ENCODE measurements at regions of chr9 and their contacts with region 1.

Region 1: DNA sequence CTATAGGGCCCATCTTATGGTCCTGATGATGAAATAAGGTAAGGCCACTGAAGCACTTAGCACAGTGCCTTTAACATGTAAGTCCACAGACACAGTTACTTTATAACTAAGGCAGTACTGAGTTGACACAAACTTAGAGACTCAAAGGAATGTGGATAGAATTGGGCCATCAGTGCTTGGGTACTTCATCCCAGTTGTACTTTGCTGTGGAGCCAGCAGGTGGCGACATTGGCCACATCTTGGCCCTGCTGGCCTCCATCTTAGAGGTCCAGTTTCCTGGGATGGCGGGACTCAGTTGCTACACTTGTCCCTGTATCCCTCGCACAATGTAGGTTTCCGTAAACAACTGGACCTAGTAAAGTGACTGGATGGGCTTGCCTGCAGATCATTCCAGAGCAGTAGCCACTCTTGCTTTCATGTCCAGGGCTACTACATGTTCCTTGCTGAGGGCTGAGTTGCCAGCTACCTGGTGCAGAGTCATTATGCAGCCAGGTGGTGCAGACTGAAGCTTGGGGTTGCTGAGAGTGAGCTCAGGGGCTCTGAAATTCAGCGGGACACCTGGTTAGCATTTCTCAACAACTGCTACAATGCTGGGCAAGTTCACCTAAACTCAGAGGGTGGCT is 10.6 kb downstream of the MTAP start:
- DNase-seq: peak; percentile 81
- H3K4me3 ChIP-seq: no peak overlapping the region
- H3K27ac ChIP-seq: peak overlapping the region; percentile 85
- H3K4me1 ChIP-seq: peaks cover 20% of the 10 kb centered on the region
- H3K27me3 ChIP-seq: no peaks in the 10 kb centered on the region
- CTCF ChIP-seq: peak; percentile 86 to 89
- POLR2A ChIP-seq: no peak

Region 2: GRCh38 chr9:21802195-21803000 is 10.7 kb before region 1 on chr9 and contains the start of gene MTAP:
- CTCF ChIA-PET with region 1: interaction called, 12 read pairs
- POLR2A ChIA-PET with region 1: no interaction called
- dilution Hi-C with region 1: no loop called
- intact Hi-C with region 1: no loop called
- DNase-seq: peak; percentile 94
- H3K4me3 ChIP-seq: peak within 1 kb of the TSS; percentile 50 to 86 (median 75)
- H3K27ac ChIP-seq: peak within 1 kb of the TSS; percentile 75
- H3K4me1 ChIP-seq: peaks cover 22% of the 10 kb centered on the region
- H3K27me3 ChIP-seq: peaks cover 5 to 10% of the 10 kb centered on the region in 2 experiments
- CTCF ChIP-seq: no peak
- POLR2A ChIP-seq: peak; percentile 88
- total RNA-seq, gene MTAP: 51.2 and 55.1 TPM in 2 replicates

Region 3: DNA sequence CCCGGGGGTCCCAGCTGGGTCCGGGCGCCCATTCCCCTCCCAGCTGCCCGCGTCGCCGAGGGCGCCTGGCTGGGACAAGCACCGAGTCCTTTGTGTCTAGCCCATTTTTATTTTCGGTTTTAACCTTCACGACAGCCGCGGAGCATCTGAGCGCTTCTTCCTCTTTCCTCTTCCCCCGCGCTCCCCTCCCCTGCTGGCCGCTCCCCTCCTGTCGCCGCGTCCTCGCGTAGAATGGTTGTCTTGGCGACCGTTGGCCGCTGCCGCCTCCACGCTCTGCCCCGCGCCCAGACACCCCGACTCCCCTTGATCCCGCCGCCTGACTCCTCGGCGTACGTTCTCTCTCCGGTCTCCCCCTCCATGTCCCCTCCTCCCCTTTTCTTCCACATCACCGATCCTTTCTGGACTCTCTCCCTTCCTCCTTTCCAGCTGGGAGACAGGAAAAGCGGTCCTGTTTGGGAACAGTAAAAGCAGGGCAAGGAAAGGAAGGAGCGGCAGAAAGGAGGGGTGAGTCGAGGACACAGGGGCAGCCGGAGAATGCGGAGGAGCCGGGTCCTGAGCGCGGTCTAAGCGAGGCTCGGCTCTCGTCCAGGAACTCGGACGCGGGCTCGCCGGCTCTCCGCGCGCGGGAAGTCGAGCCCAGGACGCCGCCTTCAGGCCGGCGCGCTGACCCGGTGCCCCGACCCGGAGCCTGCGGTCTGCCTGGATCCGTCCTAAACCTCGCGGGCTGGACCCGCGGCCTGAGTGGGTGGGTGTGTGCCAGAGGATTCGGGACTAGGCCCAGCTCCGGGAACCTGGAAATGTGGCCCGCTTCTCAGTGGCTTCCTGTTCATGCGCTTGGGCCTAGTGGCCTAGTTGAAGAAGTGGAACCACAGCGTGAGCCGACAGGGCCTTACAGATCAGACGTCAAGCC is 182.4 kb after region 1 on chr9:
- CTCF ChIA-PET with region 1: interaction called, 19 read pairs
- POLR2A ChIA-PET with region 1: interaction called, 3 read pairs
- dilution Hi-C with region 1: no loop called
- intact Hi-C with region 1: loop called (anchors 1 kb)
- DNase-seq: peak; percentile 64
- H3K4me3 ChIP-seq: peak overlapping the region; percentile 64 to 97 (median 94)
- H3K27ac ChIP-seq: peak overlapping the region; percentile 75
- H3K4me1 ChIP-seq: peaks cover 7% of the 10 kb centered on the region
- H3K27me3 ChIP-seq: no peaks in the 10 kb centered on the region
- CTCF ChIP-seq: peak; percentile 23 to 43
- POLR2A ChIP-seq: no peak

Region 4: DNA sequence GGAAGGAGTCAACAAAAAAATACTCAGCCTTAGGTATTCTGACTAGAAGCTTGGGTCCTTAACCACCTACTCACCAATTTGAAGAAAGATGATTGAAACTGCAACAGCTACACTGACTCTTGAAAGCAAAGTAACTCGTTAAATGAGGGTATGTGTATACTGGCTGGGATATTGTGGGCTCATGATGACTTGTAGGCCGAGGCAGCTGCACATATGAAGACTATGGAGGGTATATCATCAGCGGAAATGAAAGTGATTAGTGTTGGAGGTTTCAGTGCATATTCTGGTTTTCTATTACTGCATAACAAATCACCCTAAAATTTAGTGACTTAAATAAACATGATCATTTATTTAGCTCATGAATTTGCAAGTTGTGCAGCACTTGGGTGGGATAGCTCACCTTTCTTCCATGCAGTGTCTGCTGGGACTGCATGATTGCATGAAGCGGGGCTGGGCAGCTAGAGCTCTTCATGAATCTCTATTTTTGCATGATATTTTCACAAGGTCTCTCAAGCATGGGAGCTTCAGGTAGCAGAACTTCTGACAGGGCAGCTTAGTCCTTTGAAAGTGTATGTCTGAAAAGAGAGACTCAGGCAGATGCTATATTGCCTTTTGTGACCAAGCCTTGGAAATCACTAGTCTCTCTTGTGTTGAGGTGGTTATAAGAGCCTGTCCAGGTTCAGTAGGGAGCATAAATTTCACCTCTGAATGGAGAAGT is 292.1 kb after region 1 on chr9:
- CTCF ChIA-PET with region 1: interaction called, 3 read pairs
- POLR2A ChIA-PET with region 1: no interaction called
- dilution Hi-C with region 1: no loop called
- intact Hi-C with region 1: loop called (anchors 5 kb)
- DNase-seq: no peak
- H3K4me3 ChIP-seq: no peak overlapping the region
- H3K27ac ChIP-seq: no peak overlapping the region
- H3K4me1 ChIP-seq: peaks cover 20% of the 10 kb centered on the region
- H3K27me3 ChIP-seq: no peaks in the 10 kb centered on the region
- CTCF ChIP-seq: no peak
- POLR2A ChIP-seq: no peak

Region 5: GRCh38 chr9:22211593-22212360 is 398.7 kb after region 1 on chr9:
- CTCF ChIA-PET with region 1: interaction called, 6 read pairs
- POLR2A ChIA-PET with region 1: no interaction called
- dilution Hi-C with region 1: no loop called
- intact Hi-C with region 1: loop called (anchors 1 kb)
- DNase-seq: peak; percentile 92
- H3K4me3 ChIP-seq: no peak overlapping the region
- H3K27ac ChIP-seq: peak overlapping the region; percentile 21
- H3K4me1 ChIP-seq: peaks cover 30% of the 10 kb centered on the region
- H3K27me3 ChIP-seq: no peaks in the 10 kb centered on the region
- CTCF ChIP-seq: no peak
- POLR2A ChIP-seq: no peak

Region 6: GRCh38 chr9:22244141-22245011 is 431.3 kb after region 1 on chr9:
- CTCF ChIA-PET with region 1: interaction called, 166 read pairs
- POLR2A ChIA-PET with region 1: no interaction called
- dilution Hi-C with region 1: no loop called
- intact Hi-C with region 1: loop called (anchors 1 kb)
- DNase-seq: peak; percentile 47
- H3K4me3 ChIP-seq: no peak overlapping the region
- H3K27ac ChIP-seq: no peak overlapping the region
- H3K4me1 ChIP-seq: peaks cover 6% of the 10 kb centered on the region
- H3K27me3 ChIP-seq: peaks cover 4 to 7% of the 10 kb centered on the region in 2 experiments
- CTCF ChIP-seq: peak; percentile 28 to 58
- POLR2A ChIP-seq: no peak

Region 7: DNA sequence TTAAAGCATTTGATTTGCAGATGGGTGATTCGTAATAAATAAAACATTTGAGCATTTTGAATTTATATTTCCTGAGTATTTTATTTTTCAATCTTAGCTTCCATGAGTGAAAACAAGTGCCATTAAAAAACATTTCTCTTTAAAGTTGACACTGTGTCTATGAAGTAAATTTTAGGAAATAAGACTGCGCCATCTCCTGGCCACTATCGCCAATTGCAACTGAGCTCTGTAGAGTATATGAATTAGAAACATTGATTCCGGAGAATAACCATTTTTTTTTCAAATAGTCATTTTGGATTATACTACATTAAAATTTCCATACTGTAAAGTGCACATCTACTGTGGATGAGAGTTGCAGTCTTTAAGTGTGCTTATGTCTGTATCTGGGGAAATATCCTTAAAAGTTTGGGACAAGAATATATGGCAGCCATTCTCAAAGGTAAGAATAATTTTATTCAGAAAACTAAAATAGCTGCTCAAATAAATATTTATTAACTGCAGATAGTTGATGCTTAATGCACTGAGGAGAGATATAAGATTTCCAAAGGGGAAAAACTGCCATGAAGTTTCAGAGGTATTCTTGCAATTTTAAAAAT is 639.5 kb after region 1 on chr9:
- CTCF ChIA-PET with region 1: interaction called, 51 read pairs
- POLR2A ChIA-PET with region 1: no interaction called
- dilution Hi-C with region 1: no loop called
- intact Hi-C with region 1: loop called (anchors 1 kb)
- DNase-seq: peak; percentile 63
- H3K4me3 ChIP-seq: no peak overlapping the region
- H3K27ac ChIP-seq: no peak overlapping the region
- H3K4me1 ChIP-seq: peaks cover 13% of the 10 kb centered on the region
- H3K27me3 ChIP-seq: no peaks in the 10 kb centered on the region
- CTCF ChIP-seq: peak; percentile 61 to 68
- POLR2A ChIP-seq: no peak